Spleen (tissue), 13 donors: ENCODE measurements at regions of chr17 and their contacts with region 1.

Region 1: GRCh38 chr17:80970044-80970761 is 21.4 kb upstream of the CHMP6 start:
- DNase-seq: peak; percentile 89
- H3K4me3 ChIP-seq: peak overlapping the region in 4 of 8 donors; percentile 5 to 57 (median 10)
- H3K27ac ChIP-seq: peak overlapping the region; percentile 66 to 96 (median 87)
- H3K4me1 ChIP-seq: peaks cover 7 to 52% (median 40%) of the 10 kb centered on the region in 6 donors
- H3K27me3 ChIP-seq: peaks cover 0 to 38% (median 0%) of the 10 kb centered on the region in 7 donors
- CTCF ChIP-seq: peak in 9 of 11 experiments; percentile 35 to 67 (median 57)
- POLR2A ChIP-seq: no peak

Region 2: DNA sequence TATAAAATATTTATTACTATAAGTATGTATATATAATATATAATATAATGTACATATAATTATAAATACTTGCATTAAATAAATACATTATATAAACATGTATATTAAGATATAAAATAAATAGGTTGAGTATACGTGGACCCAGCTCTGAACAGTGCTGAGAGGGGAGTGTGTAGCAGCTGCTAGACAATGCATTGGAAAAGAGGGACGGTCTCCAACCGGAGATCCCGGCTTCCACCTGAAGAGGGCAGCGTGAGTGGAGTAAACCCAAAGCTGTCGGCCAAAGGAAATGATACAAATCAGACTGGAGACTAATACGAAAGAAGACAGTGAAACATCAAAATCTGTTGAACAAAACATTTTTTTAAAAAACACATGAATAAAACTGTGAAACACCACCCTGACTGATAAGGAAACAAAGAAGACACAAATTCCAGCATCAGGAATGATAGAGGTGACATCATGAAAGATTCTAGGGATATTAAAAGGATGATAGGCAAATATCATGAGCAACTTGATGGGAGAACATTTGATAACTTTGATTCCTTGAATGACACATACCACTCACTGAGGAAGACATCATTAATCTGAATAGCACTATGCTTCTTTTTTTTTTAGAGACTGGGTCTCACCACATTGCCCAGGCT is 103.9 kb before region 1 on chr17:
- intact Hi-C with region 1: loop called (anchors 10 kb)
- DNase-seq: peak; percentile 79
- H3K4me3 ChIP-seq: no peak overlapping the region
- H3K27ac ChIP-seq: no peak overlapping the region
- H3K4me1 ChIP-seq: peaks cover 3 to 38% (median 9%) of the 10 kb centered on the region in 6 donors
- H3K27me3 ChIP-seq: no peaks in the 10 kb centered on the region
- CTCF ChIP-seq: peak; percentile 50 to 81 (median 74)
- POLR2A ChIP-seq: no peak

Region 3: DNA sequence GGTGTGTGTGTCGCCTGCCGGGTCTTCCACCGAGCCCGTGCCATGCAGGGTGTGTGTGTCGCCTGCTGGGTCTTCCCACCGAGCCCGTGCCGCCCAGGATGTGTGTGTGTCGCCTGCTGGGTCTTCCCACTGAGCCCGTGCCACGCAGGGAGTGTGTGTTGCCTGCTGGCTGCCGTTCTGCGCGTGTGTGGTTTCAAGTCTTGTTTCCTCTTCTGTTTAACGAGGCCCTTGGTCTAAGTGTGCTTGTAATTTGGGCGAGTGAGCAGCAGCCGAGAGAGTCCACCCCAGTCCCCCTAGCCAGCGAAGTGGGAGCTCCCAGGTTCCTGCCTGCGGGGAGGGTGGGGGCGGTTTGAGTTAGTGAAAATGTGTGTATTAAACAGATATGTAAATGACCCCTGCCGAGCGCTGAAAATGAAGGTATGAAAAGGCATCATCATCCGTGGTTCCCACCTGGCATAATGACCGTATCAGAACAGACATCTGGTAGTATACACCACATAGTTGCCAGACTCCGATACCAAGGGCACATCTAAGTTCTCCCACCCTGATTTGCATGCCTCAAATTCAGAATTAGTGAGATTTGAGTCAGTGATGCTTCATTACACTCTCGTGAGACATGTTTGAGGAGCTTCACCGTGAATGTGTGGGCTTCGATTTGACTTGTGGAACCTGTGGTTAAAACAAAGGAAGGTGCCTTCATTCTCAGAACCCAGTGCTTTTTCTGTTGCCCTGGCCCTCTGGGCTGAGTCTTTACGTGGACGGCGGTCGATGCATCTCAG is 93.1 kb before region 1 on chr17:
- intact Hi-C with region 1: no loop called
- DNase-seq: peak; percentile 73
- H3K4me3 ChIP-seq: peak overlapping the region in 3 of 8 donors; percentile 1 to 27 (median 10)
- H3K27ac ChIP-seq: peak overlapping the region in 5 of 8 donors; percentile 24 to 67 (median 57)
- H3K4me1 ChIP-seq: peaks cover 15 to 64% (median 30%) of the 10 kb centered on the region in 6 donors
- H3K27me3 ChIP-seq: no peaks in the 10 kb centered on the region
- CTCF ChIP-seq: no peak
- POLR2A ChIP-seq: no peak

Region 4: GRCh38 chr17:81711814-81712467 is 741.7 kb after region 1 on chr17 and contains the start of gene SLC25A10:
- intact Hi-C with region 1: no loop called
- DNase-seq: peak; percentile 92
- H3K4me3 ChIP-seq: peak within 1 kb of the TSS; percentile 66 to 99 (median 90)
- H3K27ac ChIP-seq: peak within 1 kb of the TSS in 5 of 8 donors; percentile 54 to 82 (median 77)
- H3K4me1 ChIP-seq: peaks cover 22 to 57% (median 34%) of the 10 kb centered on the region in 6 donors
- H3K27me3 ChIP-seq: no peaks in the 10 kb centered on the region
- CTCF ChIP-seq: peak in 4 of 11 experiments; percentile 23 to 40 (median 26)
- POLR2A ChIP-seq: no peak
- total RNA-seq, gene SLC25A10: 2.9 to 7.5 (median 3.7) TPM